ENCODE measurements at regions of chr21 and their contacts with region 1.

Region 1: GRCh38 chr21:32257962-32258785 is 20.7 kb downstream of the MIS18A start:
- DNase-seq: peak in 4 of 5 donors; percentile 63 to 76 (median 68)
- ATAC-seq: peak; percentile 68 to 87 (median 78)
- H3K4me3 ChIP-seq: no peak overlapping the region
- H3K27ac ChIP-seq: no peak overlapping the region
- H3K4me1 ChIP-seq: peaks cover 0 to 30% (median 12%) of the 10 kb centered on the region in 12 donors
- H3K27me3 ChIP-seq: no peaks in the 10 kb centered on the region
- CTCF ChIP-seq: peak; percentile 48 to 81 (median 75)
- POLR2A ChIP-seq: no peak

Region 2: DNA sequence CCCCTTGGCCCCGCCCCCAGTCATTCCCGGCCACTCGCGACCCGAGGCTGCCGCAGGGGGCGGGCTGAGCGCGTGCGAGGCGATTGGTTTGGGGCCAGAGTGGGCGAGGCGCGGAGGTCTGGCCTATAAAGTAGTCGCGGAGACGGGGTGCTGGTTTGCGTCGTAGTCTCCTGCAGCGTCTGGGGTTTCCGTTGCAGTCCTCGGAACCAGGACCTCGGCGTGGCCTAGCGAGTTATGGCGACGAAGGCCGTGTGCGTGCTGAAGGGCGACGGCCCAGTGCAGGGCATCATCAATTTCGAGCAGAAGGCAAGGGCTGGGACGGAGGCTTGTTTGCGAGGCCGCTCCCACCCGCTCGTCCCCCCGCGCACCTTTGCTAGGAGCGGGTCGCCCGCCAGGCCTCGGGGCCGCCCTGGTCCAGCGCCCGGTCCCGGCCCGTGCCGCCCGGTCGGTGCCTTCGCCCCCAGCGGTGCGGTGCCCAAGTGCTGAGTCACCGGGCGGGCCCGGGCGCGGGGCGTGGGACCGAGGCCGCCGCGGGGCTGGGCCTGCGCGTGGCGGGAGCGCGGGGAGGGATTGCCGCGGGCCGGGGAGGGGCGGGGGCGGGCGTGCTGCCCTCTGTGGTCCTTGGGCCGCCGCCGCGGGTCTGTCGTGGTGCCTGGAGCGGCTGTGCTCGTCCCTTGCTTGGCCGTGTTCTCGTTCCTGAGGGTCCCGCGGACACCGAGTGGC is 598.5 kb before region 1 on chr21 and contains the start of gene SOD1:
- intact Hi-C with region 1: loop called in 1 of 10 experiments (anchors 10 kb)
- DNase-seq: peak; percentile 96 to 97 (median 97)
- ATAC-seq: peak; percentile 97 to 99 (median 97)
- H3K4me3 ChIP-seq: peak within 1 kb of the TSS; percentile 71 to 92 (median 86)
- H3K27ac ChIP-seq: peak within 1 kb of the TSS; percentile 81 to 98 (median 93)
- H3K4me1 ChIP-seq: peaks cover 0 to 44% (median 28%) of the 10 kb centered on the region in 12 donors
- H3K27me3 ChIP-seq: no peaks in the 10 kb centered on the region
- CTCF ChIP-seq: peak in 4 of 12 donors; percentile 28 to 56 (median 40)
- POLR2A ChIP-seq: peak; percentile 7 to 94
- total RNA-seq, gene SOD1: 348 to 487 (median 422) TPM

Region 3: GRCh38 chr21:31788581-31788980 is 469.6 kb before region 1 on chr21:
- intact Hi-C with region 1: loop called (anchors 1 to 5 kb)
- DNase-seq: no peak
- ATAC-seq: no peak
- H3K4me3 ChIP-seq: no peak overlapping the region
- H3K27ac ChIP-seq: no peak overlapping the region
- H3K4me1 ChIP-seq: peaks cover 0 to 6% (median 0%) of the 10 kb centered on the region in 12 donors
- H3K27me3 ChIP-seq: no peaks in the 10 kb centered on the region
- CTCF ChIP-seq: no peak
- POLR2A ChIP-seq: no peak

Region 4: DNA sequence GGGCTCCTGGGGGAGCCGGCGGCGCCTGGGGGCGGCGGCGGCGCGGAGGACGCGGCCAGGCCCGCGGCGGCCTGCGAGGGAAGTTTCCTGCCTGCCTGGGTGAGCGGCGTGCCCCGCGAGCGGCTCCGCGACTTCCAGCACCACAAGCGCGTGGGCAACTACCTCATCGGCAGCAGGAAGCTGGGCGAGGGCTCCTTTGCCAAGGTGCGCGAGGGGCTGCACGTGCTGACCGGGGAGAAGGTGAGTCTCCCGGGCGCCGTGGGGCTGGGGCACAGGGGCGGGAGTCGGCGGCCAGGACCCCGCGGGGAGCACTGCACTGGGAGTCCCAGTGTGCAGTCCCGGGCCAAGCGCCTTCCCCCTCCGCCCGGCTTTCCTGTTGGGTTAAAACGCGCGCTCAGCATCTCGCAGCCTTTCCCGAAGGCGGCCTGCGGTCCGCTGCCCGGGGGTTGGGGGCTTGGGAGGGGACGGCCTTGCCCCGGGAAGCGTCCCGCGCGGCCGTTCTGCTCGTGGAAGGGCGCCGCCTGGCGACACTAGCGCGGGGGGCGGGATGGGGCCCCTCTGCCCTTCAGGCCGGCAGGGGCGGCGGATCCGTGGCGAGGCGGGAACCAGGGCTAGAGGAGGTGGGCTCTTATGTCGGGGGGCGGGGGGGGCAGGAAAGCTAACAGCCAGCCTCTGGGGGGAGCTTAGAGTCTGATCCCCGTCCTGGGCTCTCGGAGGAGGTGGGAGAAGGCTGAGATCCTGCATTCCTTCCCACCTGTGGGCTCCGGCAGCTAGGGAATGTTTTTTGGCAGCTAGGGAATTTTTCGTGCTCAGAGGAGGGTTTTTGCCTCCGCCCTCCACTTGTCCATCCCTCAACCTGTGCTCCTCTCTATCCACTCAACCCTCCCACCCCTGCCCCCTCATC is 384.2 kb before region 1 on chr21:
- intact Hi-C with region 1: loop called in 2 of 10 experiments (anchors 2 to 5 kb)
- DNase-seq: peak; percentile 20 to 65 (median 36)
- ATAC-seq: peak in 3 of 4 donors; percentile 24 to 44 (median 35)
- H3K4me3 ChIP-seq: peak overlapping the region; percentile 11 to 68 (median 54)
- H3K27ac ChIP-seq: no peak overlapping the region
- H3K4me1 ChIP-seq: peaks cover 0 to 27% (median 8%) of the 10 kb centered on the region in 12 donors
- H3K27me3 ChIP-seq: peaks cover 0 to 66% (median 13%) of the 10 kb centered on the region in 9 donors
- CTCF ChIP-seq: peak; percentile 39 to 63 (median 51)
- POLR2A ChIP-seq: no peak

Region 5: DNA sequence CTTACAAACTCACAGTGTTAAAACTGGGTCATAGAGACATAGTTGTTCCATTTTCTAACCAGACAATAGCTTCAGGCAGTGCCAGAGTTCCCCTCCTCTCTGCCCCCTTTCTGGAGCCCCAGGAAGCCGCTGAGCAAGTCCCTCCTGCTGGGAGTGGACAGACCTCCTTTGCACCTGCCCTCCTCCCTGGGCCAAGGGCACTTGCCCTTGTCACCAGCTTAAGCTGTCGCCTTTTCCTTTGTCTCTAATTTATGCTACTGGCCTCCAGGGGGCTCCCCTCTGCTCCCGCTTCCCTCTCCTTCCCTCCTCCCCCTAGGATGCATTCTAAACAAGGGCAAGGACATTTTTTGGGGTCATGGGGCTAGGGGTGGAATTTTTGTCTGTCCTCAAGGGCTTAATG is 161.8 kb before region 1 on chr21:
- intact Hi-C with region 1: loop called in 1 of 10 experiments (anchors 5 kb)
- DNase-seq: peak in 1 of 5 donors; percentile 38
- ATAC-seq: peak in 1 of 4 donors; percentile 42
- H3K4me3 ChIP-seq: no peak overlapping the region
- H3K27ac ChIP-seq: peak overlapping the region in 2 of 12 donors; percentile 18 to 58
- H3K4me1 ChIP-seq: peaks cover 0 to 6% (median 0%) of the 10 kb centered on the region in 12 donors
- H3K27me3 ChIP-seq: no peaks in the 10 kb centered on the region
- CTCF ChIP-seq: peak in 9 of 12 donors; percentile 5 to 41 (median 15)
- POLR2A ChIP-seq: no peak

Region 6: DNA sequence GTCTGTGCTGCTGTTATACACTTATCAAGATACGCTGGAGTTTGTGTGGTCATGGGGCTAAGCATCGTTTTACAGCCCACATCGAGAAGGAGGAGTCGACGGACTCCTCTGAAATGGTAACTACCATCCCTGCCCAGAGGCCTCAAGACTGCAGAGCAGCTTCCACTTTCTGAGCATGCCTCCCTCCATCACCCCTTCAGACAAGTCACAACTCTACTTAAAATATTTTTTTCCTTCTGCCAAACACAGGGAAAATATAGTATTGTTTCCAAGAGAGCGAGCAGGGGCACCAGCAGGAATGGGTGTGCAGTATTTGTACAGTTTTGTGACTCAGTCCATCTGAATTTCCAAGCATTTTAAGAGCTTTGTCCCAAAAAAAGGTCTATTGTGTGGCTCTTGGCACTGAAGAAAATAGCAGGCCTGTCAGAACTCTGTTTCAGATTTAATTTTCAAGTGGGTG is 168.4 kb after region 1 on chr21:
- intact Hi-C with region 1: no loop called
- DNase-seq: no peak
- ATAC-seq: peak; percentile 7 to 56 (median 28)
- H3K4me3 ChIP-seq: no peak overlapping the region
- H3K27ac ChIP-seq: peak overlapping the region in 5 of 12 donors; percentile 18 to 65 (median 47)
- H3K4me1 ChIP-seq: peaks cover 0 to 39% (median 19%) of the 10 kb centered on the region in 12 donors
- H3K27me3 ChIP-seq: no peaks in the 10 kb centered on the region
- CTCF ChIP-seq: no peak
- POLR2A ChIP-seq: no peak